ENCODE measurements at regions of chr12 and their contacts with region 1.

Region 1: DNA sequence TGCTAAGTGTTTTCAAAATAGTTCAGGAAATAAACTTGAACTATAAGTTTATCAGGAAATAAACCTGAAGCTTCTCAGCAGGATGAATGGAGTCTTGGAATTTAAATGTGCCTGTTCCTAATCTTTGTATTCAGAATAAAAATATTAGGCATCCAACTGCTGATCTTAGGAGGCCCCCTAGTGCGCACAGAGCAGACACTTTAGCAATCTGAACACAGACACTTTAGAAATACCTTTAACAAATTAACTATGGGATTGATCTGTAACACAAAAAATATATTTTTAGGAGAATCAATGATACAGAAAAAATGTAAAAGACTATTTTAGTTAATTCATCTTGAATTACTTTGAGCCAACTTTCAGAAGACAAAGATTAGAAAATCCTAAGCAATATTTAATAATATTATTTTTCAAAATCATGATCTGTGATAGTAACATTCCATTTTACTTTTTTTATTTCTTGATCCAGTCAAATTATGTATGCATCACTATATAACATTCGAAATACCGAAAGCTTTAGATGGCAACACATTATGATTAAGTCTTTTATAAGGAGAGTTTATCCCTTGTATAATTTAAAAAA is 80.9 kb downstream of the SLC41A2 start:
- DNase-seq: peak; percentile 38
- CTCF ChIP-seq: peak; percentile 68

Region 2: DNA sequence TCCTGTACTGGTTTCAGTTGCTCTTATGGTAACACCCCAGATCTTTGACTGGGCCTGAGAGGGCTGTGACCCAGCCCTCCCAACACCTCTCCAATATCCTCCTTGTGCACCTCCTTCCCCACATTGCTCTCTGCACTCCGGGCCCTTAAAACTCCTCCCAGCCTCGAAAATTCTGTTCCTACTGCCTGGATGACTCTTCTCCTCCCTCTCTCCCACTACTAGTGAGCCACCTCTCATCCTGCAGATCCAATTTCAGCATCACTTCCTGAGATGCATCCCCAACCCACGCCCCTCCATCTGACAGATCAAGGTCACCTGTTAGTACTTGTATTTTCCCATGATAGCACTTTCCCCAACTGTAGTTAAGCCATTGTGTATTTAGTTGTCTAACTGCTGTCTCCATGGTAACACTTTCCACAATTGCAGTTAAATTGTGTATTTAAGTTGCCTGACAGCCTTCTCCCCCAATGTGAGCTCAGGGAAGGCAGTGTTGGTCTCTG is 1024.7 kb before region 1 on chr12:
- in situ Hi-C with region 1: no loop called
- DNase-seq: no peak
- CTCF ChIP-seq: no peak

Region 3: DNA sequence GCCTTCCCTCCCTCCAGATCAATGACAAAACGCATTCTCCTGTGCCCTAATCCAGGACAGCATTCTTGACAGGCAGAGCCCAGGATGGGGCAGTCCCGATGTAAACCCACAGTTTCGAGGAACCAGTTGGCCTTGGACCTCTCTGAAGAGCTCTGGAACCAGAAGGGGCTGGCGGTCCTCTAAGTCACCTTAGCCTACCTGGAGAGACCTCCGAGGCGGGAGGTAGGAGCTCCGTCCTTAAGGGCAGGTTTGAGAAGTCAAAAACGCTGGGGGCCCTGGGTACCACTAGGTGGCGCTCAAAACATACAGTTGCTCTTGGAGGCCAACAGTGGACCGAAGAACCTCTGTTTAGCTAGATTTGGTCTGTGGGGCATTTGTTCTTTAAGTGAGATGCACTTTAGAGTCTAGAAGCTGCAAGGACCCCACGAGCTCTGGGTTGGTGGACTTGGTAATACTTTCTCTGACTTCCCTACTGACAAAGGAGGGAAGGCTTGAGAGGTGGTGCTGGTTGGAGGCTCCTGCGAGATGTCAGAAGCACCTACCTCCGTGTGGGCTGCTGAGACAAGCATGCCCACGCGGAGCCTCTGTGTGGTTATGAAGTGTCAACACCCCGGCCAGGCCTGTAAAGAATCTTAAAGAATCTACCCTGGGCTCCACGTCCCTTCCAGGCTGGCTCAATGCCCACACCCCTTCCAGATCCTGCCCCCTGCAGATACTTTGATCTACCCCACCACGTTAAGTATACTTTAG is 495.3 kb before region 1 on chr12:
- in situ Hi-C with region 1: loop called (anchors 10 kb)
- DNase-seq: peak; percentile 80
- CTCF ChIP-seq: peak; percentile 93

Region 4: DNA sequence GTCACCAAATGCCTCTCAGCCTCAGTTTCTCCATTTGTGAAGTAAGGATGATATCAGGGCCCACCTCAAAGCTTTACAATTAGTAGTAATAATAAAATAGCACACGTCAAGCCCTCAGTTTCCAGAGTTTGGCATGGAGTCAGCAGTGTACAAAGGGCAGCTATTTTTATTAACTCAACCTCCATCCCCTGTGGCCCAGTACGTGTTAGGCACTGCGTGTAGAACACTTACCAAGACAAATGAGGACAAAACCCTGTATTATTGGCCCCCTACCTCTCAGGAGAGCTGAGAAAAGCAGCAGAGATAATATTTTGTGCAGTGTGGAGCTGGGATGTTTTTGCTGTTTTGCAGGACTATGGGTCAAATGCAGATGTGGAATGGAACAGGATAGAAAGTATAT is 734.1 kb after region 1 on chr12:
- in situ Hi-C with region 1: no loop called
- DNase-seq: no peak
- CTCF ChIP-seq: no peak